AG04450 (cell line): ENCODE measurements at regions of chr3 and their contacts with region 1.

Region 1: GRCh38 chr3:161274719-161275298 is 53.7 kb downstream of the NMD3 start:
- DNase-seq: peak; percentile 26
- H3K4me3 ChIP-seq: no peak overlapping the region
- H3K27ac ChIP-seq: no peak overlapping the region
- H3K27me3 ChIP-seq: no peaks in the 10 kb centered on the region
- CTCF ChIP-seq: peak; percentile 73

Region 2: DNA sequence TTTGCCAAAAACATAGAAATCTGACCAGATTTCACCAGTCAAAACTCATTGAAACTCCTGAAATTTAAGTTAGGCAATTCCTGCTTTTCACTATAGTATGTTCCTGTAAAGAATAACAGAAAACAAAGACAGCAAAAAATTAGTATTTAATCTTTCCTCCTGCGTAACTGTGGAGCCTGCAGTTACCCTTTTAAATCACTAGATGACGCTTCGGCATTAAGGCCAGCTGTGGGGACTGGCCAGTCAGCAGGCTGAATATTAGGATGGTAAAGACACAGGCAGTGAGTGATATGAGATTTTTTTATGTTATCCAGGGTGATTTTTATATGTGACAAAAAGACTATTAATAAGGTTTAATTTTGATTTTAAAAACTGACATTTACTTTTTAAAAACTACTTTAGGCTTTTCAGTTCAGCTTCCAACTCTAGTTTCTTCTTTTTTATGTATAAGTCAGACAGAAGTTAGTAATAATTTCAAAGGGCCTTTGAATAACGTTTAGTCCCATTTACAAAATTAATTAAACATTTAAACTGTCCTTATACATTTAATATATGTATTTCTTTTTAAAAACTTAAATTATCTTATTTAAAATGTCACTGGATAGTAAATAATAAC is 353.7 kb before region 1 on chr3:
- CTCF ChIA-PET with region 1: interaction called, 31 read pairs
- POLR2A ChIA-PET with region 1: no interaction called
- DNase-seq: no peak
- H3K4me3 ChIP-seq: no peak overlapping the region
- H3K27ac ChIP-seq: no peak overlapping the region
- H3K27me3 ChIP-seq: no peaks in the 10 kb centered on the region
- CTCF ChIP-seq: peak; percentile 92

Region 3: GRCh38 chr3:160956806-160957205 is 318.0 kb before region 1 on chr3:
- CTCF ChIA-PET with region 1: interaction called, 16 read pairs
- POLR2A ChIA-PET with region 1: no interaction called
- DNase-seq: no peak
- H3K4me3 ChIP-seq: no peak overlapping the region
- H3K27ac ChIP-seq: no peak overlapping the region
- H3K27me3 ChIP-seq: no peaks in the 10 kb centered on the region
- CTCF ChIP-seq: peak; percentile 39

Region 4: GRCh38 chr3:161284989-161285388 is 10.2 kb after region 1 on chr3:
- CTCF ChIA-PET with region 1: interaction called, 36 read pairs
- POLR2A ChIA-PET with region 1: no interaction called
- DNase-seq: no peak
- H3K4me3 ChIP-seq: no peak overlapping the region
- H3K27ac ChIP-seq: no peak overlapping the region
- H3K27me3 ChIP-seq: no peaks in the 10 kb centered on the region
- CTCF ChIP-seq: no peak

Region 5: DNA sequence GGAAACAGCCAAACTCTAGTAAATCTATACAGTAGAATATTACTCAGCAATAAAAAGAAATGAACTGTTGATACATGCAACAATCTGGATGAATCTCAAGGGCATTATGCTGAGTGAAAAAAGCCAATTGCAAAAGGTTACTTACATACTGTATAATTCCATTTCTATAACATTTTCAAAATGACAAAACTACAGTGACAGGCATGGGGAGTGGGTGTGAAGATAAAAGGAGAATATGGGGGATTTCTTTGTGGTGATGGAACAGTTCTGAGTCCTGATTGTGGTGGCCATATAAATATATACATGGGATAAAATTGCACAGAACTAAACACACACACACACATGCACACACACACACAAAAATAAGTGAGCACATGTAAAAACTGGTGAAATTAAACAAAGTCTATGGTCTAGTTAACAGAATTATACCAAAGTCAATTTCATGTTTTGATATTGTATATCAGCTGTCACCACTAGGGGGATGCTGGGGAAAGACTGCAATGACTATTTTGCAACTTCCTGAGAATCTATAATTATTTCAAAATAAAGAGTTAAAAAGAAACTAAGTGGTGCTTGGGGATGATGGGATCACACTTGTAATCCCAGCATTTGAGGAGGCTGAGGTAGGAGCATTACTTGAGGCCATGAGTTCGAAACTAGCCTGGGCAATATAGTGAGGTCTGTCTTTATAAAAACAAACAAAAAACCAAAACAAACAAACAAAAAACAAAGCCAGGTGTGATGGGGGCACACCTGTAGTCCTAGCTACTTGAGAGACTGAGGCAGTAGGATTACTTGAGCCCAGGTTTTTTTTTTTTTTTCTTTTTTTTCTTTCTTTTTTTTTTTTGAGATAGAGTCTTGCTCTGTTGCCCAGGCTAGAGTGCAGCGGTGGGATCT is 30.5 kb after region 1 on chr3:
- CTCF ChIA-PET with region 1: interaction called, 10 read pairs
- POLR2A ChIA-PET with region 1: no interaction called
- DNase-seq: peak; percentile 1
- H3K4me3 ChIP-seq: no peak overlapping the region
- H3K27ac ChIP-seq: no peak overlapping the region
- H3K27me3 ChIP-seq: peaks cover 3% of the 10 kb centered on the region
- CTCF ChIP-seq: peak; percentile 82

Region 6: DNA sequence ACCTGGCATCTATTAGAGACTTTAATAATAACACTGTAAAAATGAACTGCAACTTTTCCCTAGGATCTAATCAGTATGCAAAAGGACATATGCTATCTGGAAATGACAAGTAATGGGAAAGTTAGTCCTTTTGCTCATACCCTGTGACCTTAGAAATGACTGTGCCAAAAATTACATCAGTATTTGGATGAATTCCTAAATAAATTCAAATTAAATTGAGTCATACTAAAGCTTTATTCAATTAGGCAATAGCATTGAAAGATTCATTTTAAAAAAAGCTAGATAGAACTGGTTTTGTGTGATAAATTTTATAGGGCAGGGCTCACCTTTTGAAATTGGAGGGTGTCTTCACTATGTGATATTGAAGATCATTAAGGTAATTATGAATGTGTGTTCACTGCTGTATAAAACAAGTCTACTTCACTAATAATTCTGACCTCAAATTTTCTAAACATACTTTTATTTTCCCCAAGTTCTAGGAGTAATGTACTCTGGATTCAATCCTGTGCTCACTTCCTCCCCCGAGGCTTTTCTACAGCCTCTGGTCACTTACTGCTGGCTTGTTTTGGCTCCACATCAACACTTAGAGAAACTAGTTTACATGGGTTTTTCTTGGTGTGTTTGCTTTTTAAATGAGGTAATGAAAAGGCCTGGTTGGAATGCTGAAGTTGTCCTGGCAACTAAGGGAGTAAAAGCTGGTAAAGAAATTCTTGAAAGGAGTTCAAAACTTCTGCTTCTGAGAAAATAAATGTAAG is 140.9 kb after region 1 on chr3:
- CTCF ChIA-PET with region 1: interaction called, 69 read pairs
- POLR2A ChIA-PET with region 1: no interaction called
- DNase-seq: peak; percentile 61
- H3K4me3 ChIP-seq: no peak overlapping the region
- H3K27ac ChIP-seq: peak overlapping the region; percentile 84
- H3K27me3 ChIP-seq: no peaks in the 10 kb centered on the region
- CTCF ChIP-seq: no peak